RWPE1 (cell line): ENCODE measurements at regions of chr1 and their contacts with region 1.

Region 1: DNA sequence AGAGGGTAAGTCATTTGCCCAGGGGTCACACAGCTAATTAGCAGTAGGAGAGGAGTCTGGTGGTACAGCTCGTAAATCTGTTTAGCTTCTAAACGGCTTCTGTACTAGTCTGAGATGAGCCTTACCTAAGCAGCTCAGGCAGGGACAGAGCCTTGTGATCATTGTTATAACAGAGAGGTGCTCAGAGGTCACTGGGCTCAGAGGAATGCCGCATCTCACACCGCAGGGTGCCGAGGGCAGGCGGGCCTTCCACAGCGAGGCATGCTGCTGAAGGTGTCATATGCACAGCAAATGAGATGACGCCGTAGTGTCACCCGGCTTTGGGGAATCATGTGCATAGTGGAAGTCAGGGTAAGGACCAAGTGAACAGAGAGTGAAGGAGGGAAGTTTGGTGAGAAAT is 305.2 kb upstream of the FMN2 start:
- DNase-seq: no peak
- H3K27ac ChIP-seq: no peak overlapping the region
- CTCF ChIP-seq: no peak

Region 2: DNA sequence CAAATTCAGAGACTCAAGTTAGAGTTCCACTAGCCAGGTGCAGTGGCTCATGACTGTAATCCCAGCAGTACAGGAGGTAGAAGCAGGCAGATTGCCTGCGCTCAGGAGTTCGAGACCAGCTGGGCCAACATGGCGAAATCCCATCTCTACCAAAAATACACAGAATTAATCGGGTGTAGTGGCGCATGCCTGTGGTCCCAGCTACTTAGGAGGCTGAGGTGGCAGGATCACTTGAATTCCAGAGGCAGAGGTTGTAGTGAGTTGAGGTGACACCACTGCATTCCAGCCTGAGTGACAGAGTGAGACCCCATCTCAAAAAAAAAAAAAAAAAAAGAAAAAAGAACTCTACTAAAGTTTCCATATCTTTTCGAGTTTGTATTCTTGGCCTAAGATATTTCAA is 436.8 kb before region 1 on chr1:
- CTCF ChIA-PET with region 1: interaction called, 10 read pairs
- POLR2A ChIA-PET with region 1: no interaction called
- DNase-seq: no peak
- H3K27ac ChIP-seq: no peak overlapping the region
- CTCF ChIP-seq: no peak

Region 3: GRCh38 chr1:239802275-239802674 is 15.8 kb after region 1 on chr1:
- CTCF ChIA-PET with region 1: no interaction called
- POLR2A ChIA-PET with region 1: no interaction called
- DNase-seq: no peak
- H3K27ac ChIP-seq: no peak overlapping the region
- CTCF ChIP-seq: no peak